CD4-positive, alpha-beta T cell (primary cell): ENCODE measurements at regions of chr22 and their contacts with region 1.

Region 1: GRCh38 chr22:36454916-36455570 is 26.4 kb downstream of the TXN2 start:
- DNase-seq: peak; percentile 86 to 98 (median 96)
- ATAC-seq: peak; percentile 70
- H3K4me3 ChIP-seq: peak overlapping the region; percentile 76
- H3K4me3 Mint-ChIP-seq: peak overlapping the region; percentile 84
- H3K27ac ChIP-seq: peak overlapping the region; percentile 89 to 92
- H3K27ac Mint-ChIP-seq: peak overlapping the region; percentile 93
- H3K4me1 ChIP-seq: peaks cover 61% of the 10 kb centered on the region
- H3K4me1 Mint-ChIP-seq: peaks cover 46% of the 10 kb centered on the region
- H3K27me3 ChIP-seq: no peaks in the 10 kb centered on the region
- H3K27me3 Mint-ChIP-seq: no peaks in the 10 kb centered on the region
- CTCF ChIP-seq: no peak

Region 2: DNA sequence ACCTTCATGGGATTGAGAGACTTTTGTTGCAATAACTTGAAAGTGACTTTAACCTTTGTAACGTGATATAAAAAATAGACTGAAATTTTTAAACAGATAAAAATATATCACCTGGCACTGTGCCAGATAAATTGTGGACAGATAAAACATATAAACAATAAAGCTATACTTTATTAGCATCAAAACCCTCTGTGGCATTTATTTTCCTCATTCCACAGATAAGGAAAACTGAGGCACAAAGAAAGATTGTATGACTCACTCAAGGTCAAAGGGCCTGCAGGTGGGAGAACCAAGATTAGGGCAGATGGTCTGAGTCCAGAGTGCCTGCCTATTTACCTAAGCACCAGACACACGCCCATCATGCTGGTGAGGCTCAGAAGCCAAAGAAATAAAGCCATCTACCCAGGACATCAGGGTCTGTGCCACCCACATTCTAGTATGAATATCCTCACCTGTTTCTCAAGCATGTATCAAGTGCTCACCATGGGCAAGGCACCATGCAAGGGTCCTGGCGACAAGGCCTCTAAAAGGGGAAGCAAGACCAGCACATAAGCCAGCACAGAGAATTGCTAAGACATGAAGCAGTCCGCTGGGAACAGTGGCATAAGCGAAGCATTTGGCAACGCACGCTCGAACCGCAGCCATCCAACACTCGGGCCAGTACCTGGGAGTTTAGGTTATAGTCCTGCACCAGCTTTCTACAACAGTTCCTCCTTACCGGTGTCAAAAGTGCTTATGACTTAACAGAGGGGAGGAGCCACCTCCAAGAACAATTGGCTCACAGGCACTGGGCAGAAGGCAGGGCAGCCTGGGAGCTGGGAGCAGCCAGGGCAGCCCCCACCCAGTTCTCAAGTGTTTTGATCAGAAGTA is 84.9 kb before region 1 on chr22:
- CTCF ChIA-PET with region 1: interaction called, 5 read pairs
- POLR2A ChIA-PET with region 1: interaction called, 12 read pairs
- intact Hi-C with region 1: loop called in 1 of 2 experiments (anchors 2 kb)
- DNase-seq: peak in 4 of 14 experiments; percentile 38 to 65 (median 62)
- ATAC-seq: peak; percentile 39
- H3K4me3 ChIP-seq: peak overlapping the region; percentile 39
- H3K4me3 Mint-ChIP-seq: peak overlapping the region; percentile 90
- H3K27ac ChIP-seq: peak overlapping the region; percentile 63 to 87
- H3K27ac Mint-ChIP-seq: peak overlapping the region; percentile 93
- H3K4me1 ChIP-seq: peaks cover 99% of the 10 kb centered on the region
- H3K4me1 Mint-ChIP-seq: peaks cover 94% of the 10 kb centered on the region
- H3K27me3 ChIP-seq: no peaks in the 10 kb centered on the region
- H3K27me3 Mint-ChIP-seq: no peaks in the 10 kb centered on the region
- CTCF ChIP-seq: no peak

Region 3: GRCh38 chr22:36409911-36410756 is 44.9 kb before region 1 on chr22:
- CTCF ChIA-PET with region 1: interaction called, 3 read pairs
- POLR2A ChIA-PET with region 1: interaction called, 10 read pairs
- intact Hi-C with region 1: loop called in 1 of 2 experiments (anchors 5 kb)
- DNase-seq: peak; percentile 32 to 89 (median 66)
- ATAC-seq: peak; percentile 81
- H3K4me3 ChIP-seq: peak overlapping the region; percentile 34
- H3K4me3 Mint-ChIP-seq: peak overlapping the region; percentile 40
- H3K27ac ChIP-seq: peak overlapping the region; percentile 44 to 63
- H3K27ac Mint-ChIP-seq: peak overlapping the region; percentile 74
- H3K4me1 ChIP-seq: peaks cover 66% of the 10 kb centered on the region
- H3K4me1 Mint-ChIP-seq: peaks cover 63% of the 10 kb centered on the region
- H3K27me3 ChIP-seq: no peaks in the 10 kb centered on the region
- H3K27me3 Mint-ChIP-seq: no peaks in the 10 kb centered on the region
- CTCF ChIP-seq: no peak

Region 4: DNA sequence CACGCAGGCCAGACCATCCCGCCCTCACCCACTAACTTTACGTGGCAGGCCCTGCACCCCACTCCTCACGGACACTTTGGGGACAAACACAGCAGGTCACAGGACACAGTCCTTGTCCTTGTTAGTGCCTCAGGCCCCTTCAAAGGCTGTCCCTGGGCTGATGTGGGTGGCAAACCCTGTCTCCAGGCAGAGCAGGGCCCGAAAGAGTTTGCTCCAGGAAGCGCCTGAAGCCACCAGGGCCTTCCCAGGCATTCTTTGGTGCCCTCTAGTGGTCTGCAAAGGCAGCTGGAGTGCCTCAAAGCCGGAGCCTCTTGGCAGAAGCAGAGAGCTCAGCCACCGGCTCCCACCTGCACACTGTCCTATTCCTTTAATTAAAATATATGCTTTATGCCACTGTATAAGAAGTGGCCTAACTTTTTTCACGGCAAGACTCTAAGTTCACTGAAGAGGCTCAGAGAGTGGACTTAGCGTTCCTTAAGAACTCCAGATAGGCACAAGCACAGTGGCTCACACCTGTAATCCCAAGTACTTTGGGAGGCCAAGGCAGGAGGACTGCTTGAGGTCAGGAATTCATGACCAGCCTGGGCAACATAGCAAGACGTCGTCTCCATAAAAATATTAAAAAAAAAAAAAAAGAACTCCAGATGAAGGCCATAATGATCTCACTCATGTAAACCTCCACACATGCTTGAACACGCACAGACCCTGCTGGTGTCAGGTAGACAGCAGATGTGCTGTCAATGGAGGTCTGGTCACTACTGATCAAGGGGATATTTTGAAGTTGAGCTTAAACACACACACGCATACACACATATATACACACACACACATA is 15.3 kb after region 1 on chr22:
- CTCF ChIA-PET with region 1: interaction called, 11 read pairs
- POLR2A ChIA-PET with region 1: interaction called, 4 read pairs
- intact Hi-C with region 1: no loop called
- DNase-seq: peak; percentile 71 to 92 (median 78)
- ATAC-seq: peak; percentile 98
- H3K4me3 ChIP-seq: no peak overlapping the region
- H3K4me3 Mint-ChIP-seq: no peak overlapping the region
- H3K27ac ChIP-seq: no peak overlapping the region
- H3K27ac Mint-ChIP-seq: peak overlapping the region; percentile 70
- H3K4me1 ChIP-seq: peaks cover 27% of the 10 kb centered on the region
- H3K4me1 Mint-ChIP-seq: peaks cover 26% of the 10 kb centered on the region
- H3K27me3 ChIP-seq: no peaks in the 10 kb centered on the region
- H3K27me3 Mint-ChIP-seq: no peaks in the 10 kb centered on the region
- CTCF ChIP-seq: peak; percentile 89

Region 5: DNA sequence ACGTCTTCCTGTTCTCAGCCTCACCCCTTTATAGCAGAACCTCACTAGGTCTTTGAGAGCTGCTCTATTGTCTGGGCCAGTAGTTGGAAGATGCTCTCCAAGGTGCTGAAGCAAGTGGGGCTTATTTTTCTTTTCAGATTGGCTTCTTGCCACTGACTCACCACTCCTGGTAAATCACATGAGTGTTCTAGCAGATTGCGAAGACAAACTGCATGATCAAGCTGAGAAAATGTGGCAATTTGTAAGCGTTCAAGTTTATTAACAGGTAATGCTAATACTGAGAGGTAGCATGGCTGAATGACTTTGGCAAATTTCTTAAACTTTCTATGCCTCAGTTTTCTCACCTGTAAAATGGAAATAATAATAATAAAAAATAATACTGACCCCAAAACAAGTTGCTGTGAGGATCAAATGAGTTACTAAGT is 189.3 kb after region 1 on chr22:
- CTCF ChIA-PET with region 1: no interaction called
- POLR2A ChIA-PET with region 1: no interaction called
- intact Hi-C with region 1: no loop called
- DNase-seq: peak in 3 of 14 experiments; percentile 18 to 42 (median 37)
- ATAC-seq: no peak
- H3K4me3 ChIP-seq: no peak overlapping the region
- H3K4me3 Mint-ChIP-seq: no peak overlapping the region
- H3K27ac ChIP-seq: no peak overlapping the region
- H3K27ac Mint-ChIP-seq: no peak overlapping the region
- H3K4me1 ChIP-seq: no peaks in the 10 kb centered on the region
- H3K4me1 Mint-ChIP-seq: no peaks in the 10 kb centered on the region
- H3K27me3 ChIP-seq: peaks cover 11 to 54% of the 10 kb centered on the region in 2 experiments
- H3K27me3 Mint-ChIP-seq: peaks cover 73% of the 10 kb centered on the region
- CTCF ChIP-seq: no peak